ENCODE measurements at regions of chr20 and their contacts with region 1.

Region 1: DNA sequence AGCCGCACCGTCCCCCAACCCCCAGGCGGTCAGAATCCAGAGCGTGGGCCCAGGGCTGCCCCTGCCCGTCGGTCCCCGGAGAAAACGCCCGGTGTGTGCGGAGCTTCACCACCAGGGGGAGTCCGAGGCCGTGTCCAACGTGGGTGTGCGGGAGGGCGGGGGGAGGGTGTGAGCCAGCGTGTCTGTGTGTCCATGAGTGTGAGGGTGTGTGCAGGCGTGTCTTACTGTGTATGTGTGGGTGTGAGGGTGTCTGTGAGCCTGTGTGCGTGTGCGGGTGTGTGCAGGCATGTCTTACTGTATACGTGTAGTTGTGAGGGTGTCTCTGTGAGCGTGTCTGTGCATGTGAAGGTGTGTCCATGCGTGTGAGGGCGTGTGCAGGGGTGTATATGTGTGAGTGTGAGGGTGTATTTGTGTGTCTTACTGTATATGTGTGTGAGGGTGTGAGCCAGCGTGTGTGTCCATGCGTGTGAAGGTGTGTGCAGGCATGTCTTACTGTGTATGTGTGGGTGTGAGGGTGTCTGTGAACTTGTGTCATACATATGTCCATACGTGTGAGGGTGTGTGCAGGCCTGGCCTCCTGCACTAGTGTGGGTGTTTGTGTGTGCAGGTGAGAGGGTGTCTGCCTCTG is 24.6 kb upstream of the GATA5 start:
- DNase-seq: peak; percentile 87
- ATAC-seq: peak; percentile 65
- H3K4me3 ChIP-seq: no peak overlapping the region
- H3K4me3 Mint-ChIP-seq: peak overlapping the region; percentile 15
- H3K27ac ChIP-seq: no peak overlapping the region
- H3K27ac Mint-ChIP-seq: peak overlapping the region; percentile 67
- H3K4me1 ChIP-seq: peaks cover 28 to 44% of the 10 kb centered on the region in 2 donors
- H3K4me1 Mint-ChIP-seq: peaks cover 36% of the 10 kb centered on the region
- H3K27me3 ChIP-seq: peaks cover 0 to 5% (median 0%) of the 10 kb centered on the region in 4 experiments
- H3K27me3 Mint-ChIP-seq: peaks cover 3% of the 10 kb centered on the region
- CTCF ChIP-seq: peak; percentile 80

Region 2: GRCh38 chr20:62454904-62455636 is 45.3 kb before region 1 on chr20:
- CTCF ChIA-PET with region 1: no interaction called
- POLR2A ChIA-PET with region 1: no interaction called
- intact Hi-C with region 1: no loop called
- DNase-seq: no peak
- ATAC-seq: no peak
- H3K4me3 ChIP-seq: no peak overlapping the region
- H3K4me3 Mint-ChIP-seq: no peak overlapping the region
- H3K27ac ChIP-seq: no peak overlapping the region
- H3K27ac Mint-ChIP-seq: no peak overlapping the region
- H3K4me1 ChIP-seq: no peaks in the 10 kb centered on the region
- H3K4me1 Mint-ChIP-seq: no peaks in the 10 kb centered on the region
- H3K27me3 ChIP-seq: peaks cover 0 to 4% (median 0%) of the 10 kb centered on the region in 4 experiments
- H3K27me3 Mint-ChIP-seq: peaks cover 10% of the 10 kb centered on the region
- CTCF ChIP-seq: no peak

Region 3: GRCh38 chr20:62611819-62612218 is 111.5 kb after region 1 on chr20:
- CTCF ChIA-PET with region 1: interaction called, 65 read pairs
- POLR2A ChIA-PET with region 1: interaction called, 3 read pairs
- intact Hi-C with region 1: loop called (anchors 1 kb)
- DNase-seq: no peak
- ATAC-seq: no peak
- H3K4me3 ChIP-seq: no peak overlapping the region
- H3K4me3 Mint-ChIP-seq: no peak overlapping the region
- H3K27ac ChIP-seq: no peak overlapping the region
- H3K27ac Mint-ChIP-seq: no peak overlapping the region
- H3K4me1 ChIP-seq: peaks cover 16 to 21% of the 10 kb centered on the region in 2 donors
- H3K4me1 Mint-ChIP-seq: peaks cover 19% of the 10 kb centered on the region
- H3K27me3 ChIP-seq: no peaks in the 10 kb centered on the region
- H3K27me3 Mint-ChIP-seq: peaks cover 3% of the 10 kb centered on the region
- CTCF ChIP-seq: no peak

Measured in B cell (primary cell).